ENCODE measurements at regions of chr9 and their contacts with region 1.

Region 1: DNA sequence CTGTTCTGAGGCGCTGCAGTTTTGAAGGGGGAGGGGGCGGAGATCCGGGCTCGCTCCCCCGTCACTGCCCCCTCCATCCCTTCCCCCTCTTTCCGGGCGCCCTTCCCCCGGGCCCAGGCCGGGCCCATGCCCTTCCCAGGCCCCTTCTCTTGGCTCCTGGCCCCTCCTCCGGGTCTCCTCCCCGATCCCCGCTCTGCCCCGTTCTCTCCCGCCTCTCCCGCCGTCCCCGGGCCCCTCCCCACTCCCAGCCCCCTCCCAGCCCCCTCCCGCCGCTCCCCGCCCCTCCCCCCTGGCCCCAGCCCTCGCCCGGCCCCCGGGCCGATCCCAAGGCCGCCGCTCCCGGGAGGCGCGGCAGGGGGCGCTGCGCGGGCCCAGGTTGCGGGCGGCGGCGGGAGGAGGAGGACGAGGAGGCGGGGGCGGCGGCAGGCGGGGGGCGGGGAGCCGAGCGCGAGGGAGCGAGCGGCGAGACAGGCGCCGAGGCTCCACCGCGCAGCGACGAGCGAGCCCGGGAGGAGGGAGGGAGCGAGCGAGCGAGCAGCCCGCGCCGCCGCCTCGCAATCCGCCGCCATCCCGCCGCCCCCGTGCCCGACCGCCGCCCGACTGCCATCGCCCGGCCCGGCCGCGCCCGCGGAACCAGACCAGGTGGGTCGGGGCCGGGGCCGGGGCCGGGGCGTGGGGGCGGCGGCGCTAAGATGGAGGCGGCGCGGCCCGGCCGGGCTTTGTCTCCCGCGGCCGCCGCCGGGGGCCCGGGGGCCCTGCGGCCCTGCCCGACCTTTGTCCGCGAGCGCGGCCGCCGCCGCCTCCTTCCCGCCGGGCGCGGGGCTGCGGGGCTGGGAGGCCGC is at the start of gene PRRC2B:
- DNase-seq: peak; percentile 62
- ATAC-seq: peak; percentile 85
- H3K4me3 ChIP-seq: peak within 1 kb of the TSS; percentile 83
- H3K27ac ChIP-seq: peak within 1 kb of the TSS; percentile 60
- H3K4me1 ChIP-seq: peaks cover 17% of the 10 kb centered on the region
- H3K27me3 ChIP-seq: no peaks in the 10 kb centered on the region
- CTCF ChIP-seq: peak; percentile 57
- POLR2A ChIP-seq: peak; percentile 81
- RAD21 ChIP-seq: peak; percentile 27
- total RNA-seq, gene PRRC2B: 19.4 and 22.2 TPM in 2 replicates

Region 2: DNA sequence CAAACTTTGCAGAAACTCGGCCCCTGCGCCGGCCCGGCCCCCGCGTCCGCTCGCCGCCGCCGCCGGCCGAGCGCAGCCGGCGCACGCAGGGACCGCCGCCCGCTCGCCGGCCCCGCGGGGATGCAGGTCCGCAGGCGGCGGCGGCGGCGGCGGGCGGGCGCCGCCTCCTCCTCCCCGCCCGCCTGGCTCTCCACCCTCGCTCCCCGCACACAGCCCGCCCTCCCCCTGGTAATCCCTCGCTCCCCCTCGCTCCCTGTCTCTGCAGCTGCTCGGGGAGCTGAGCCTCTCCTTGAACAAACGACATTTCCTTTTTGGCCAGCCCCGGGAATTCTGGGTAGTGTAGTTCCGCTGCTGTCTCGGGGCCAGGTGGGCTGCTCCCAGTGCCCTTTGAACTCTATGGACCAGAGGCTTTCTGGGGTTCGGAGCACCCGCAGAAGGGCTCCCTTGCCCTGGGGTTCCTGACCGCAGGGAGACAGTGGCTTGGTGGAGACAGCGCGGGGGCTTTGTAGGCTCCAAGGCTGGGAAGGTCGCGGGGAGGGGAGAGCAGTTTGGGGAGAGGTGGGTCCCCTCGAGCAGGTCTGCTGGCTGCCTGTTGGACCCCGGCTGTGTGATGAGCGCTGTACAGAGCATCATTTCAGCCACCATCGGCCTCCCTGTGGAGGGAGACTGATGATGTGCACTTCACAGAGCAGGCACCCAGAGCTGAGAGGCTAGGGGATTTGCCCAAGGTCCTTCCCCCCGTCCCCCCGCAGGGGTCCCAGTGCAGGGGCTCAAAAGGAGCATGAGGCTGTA is 115.7 kb before region 1 on chr9:
- CTCF ChIA-PET with region 1: no interaction called
- POLR2A ChIA-PET with region 1: no interaction called
- dilution Hi-C with region 1: no loop called
- in situ Hi-C with region 1: no loop called
- intact Hi-C with region 1: no loop called
- DNase-seq: peak; percentile 78
- ATAC-seq: peak; percentile 93
- H3K4me3 ChIP-seq: peak overlapping the region; percentile 66
- H3K27ac ChIP-seq: no peak overlapping the region
- H3K4me1 ChIP-seq: no peaks in the 10 kb centered on the region
- H3K27me3 ChIP-seq: peaks cover 64% of the 10 kb centered on the region
- CTCF ChIP-seq: no peak
- POLR2A ChIP-seq: no peak
- RAD21 ChIP-seq: no peak

Region 3: GRCh38 chr9:131423171-131423581 is 29.3 kb after region 1 on chr9:
- CTCF ChIA-PET with region 1: no interaction called
- POLR2A ChIA-PET with region 1: no interaction called
- dilution Hi-C with region 1: no loop called
- in situ Hi-C with region 1: no loop called
- intact Hi-C with region 1: loop called (anchors 2 kb)
- DNase-seq: peak; percentile 91
- ATAC-seq: peak; percentile 77
- H3K4me3 ChIP-seq: no peak overlapping the region
- H3K27ac ChIP-seq: no peak overlapping the region; the same call in 1 of the 2 replicates
- H3K4me1 ChIP-seq: peaks cover 39% of the 10 kb centered on the region
- H3K27me3 ChIP-seq: no peaks in the 10 kb centered on the region
- CTCF ChIP-seq: no peak
- POLR2A ChIP-seq: no peak
- RAD21 ChIP-seq: no peak

Region 4: DNA sequence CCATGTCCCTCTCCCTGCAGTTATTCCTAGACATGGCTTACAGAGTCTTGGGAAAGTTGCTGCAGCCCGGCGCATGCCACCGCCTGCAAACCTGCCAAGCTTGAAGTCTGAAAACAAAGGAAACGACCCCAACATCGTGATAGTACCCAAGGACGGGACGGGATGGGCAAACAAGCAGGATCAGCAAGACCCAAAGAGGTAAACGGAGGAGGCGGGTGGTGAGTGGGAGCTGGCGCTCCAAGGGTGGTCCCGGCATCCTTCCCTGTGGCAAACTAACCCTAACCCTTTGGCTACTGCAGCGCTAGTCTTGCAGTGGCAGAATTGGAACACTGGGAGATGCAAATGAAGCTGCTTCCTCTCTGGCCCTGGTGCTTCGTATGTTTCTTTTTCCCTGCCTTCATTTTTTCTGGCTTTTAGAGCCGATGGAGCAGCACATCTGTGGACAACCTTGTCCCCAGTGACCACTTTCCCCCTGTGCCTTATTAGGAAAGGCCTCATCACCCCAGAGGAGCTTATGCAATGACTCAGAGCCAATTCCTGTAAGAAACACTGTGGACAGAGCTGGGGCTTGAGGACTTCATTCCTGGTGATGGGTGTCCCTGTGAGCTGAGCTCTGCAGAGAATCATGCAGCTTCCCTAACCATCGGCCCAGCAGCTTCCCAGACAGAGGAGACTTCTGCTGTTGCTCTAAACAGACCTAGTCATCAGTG is 38.9 kb after region 1 on chr9:
- CTCF ChIA-PET with region 1: no interaction called
- POLR2A ChIA-PET with region 1: no interaction called
- dilution Hi-C with region 1: no loop called
- in situ Hi-C with region 1: no loop called
- intact Hi-C with region 1: loop called (anchors 2 kb)
- DNase-seq: peak; percentile 97
- ATAC-seq: peak; percentile 93
- H3K4me3 ChIP-seq: no peak overlapping the region
- H3K27ac ChIP-seq: peak overlapping the region; percentile 75
- H3K4me1 ChIP-seq: peaks cover 27% of the 10 kb centered on the region
- H3K27me3 ChIP-seq: no peaks in the 10 kb centered on the region
- CTCF ChIP-seq: no peak
- POLR2A ChIP-seq: peak; percentile 45; the same call in 1 of the 2 replicates
- RAD21 ChIP-seq: no peak; the same call in 1 of the 2 replicates

Measured in IMR-90 (cell line).